Ovary (tissue), 10 donors: ENCODE measurements at regions of chr19 and their contacts with region 1.

Region 1: GRCh38 chr19:18152444-18152816 is 533 bp upstream of the PIK3R2 start:
- DNase-seq: peak; percentile 94 to 99 (median 98)
- H3K4me3 ChIP-seq: peak overlapping the region; percentile 66
- H3K27ac ChIP-seq: peak overlapping the region; percentile 73 to 79
- H3K4me1 ChIP-seq: peaks cover 18% of the 10 kb centered on the region
- H3K27me3 ChIP-seq: no peaks in the 10 kb centered on the region
- CTCF ChIP-seq: peak; percentile 22 to 76 (median 74)
- EP300 ChIP-seq: no peak
- POLR2A ChIP-seq: peak; percentile 2

Region 2: GRCh38 chr19:17859533-17860330 is 292.7 kb before region 1 on chr19 and contains the start of gene RPL18A:
- intact Hi-C with region 1: no loop called
- DNase-seq: peak; percentile 98 to 99 (median 98)
- H3K4me3 ChIP-seq: peak within 1 kb of the TSS; percentile 92
- H3K27ac ChIP-seq: peak within 1 kb of the TSS; percentile 79 to 86
- H3K4me1 ChIP-seq: peaks cover 5% of the 10 kb centered on the region
- H3K27me3 ChIP-seq: no peaks in the 10 kb centered on the region
- CTCF ChIP-seq: peak; percentile 63 to 88 (median 78)
- EP300 ChIP-seq: no peak
- POLR2A ChIP-seq: peak; percentile 91
- total RNA-seq, gene RPL18A: 2,762 to 5,071 (median 3,195) TPM

Region 3: GRCh38 chr19:17947815-17948513 is 204.5 kb before region 1 on chr19:
- intact Hi-C with region 1: no loop called
- DNase-seq: peak; percentile 93 to 97 (median 96)
- H3K4me3 ChIP-seq: peak overlapping the region; percentile 61
- H3K27ac ChIP-seq: peak overlapping the region in 1 of 2 donors; percentile 21
- H3K4me1 ChIP-seq: peaks cover 14% of the 10 kb centered on the region
- H3K27me3 ChIP-seq: peaks cover 11% of the 10 kb centered on the region
- CTCF ChIP-seq: no peak
- EP300 ChIP-seq: no peak
- POLR2A ChIP-seq: no peak

Region 4: DNA sequence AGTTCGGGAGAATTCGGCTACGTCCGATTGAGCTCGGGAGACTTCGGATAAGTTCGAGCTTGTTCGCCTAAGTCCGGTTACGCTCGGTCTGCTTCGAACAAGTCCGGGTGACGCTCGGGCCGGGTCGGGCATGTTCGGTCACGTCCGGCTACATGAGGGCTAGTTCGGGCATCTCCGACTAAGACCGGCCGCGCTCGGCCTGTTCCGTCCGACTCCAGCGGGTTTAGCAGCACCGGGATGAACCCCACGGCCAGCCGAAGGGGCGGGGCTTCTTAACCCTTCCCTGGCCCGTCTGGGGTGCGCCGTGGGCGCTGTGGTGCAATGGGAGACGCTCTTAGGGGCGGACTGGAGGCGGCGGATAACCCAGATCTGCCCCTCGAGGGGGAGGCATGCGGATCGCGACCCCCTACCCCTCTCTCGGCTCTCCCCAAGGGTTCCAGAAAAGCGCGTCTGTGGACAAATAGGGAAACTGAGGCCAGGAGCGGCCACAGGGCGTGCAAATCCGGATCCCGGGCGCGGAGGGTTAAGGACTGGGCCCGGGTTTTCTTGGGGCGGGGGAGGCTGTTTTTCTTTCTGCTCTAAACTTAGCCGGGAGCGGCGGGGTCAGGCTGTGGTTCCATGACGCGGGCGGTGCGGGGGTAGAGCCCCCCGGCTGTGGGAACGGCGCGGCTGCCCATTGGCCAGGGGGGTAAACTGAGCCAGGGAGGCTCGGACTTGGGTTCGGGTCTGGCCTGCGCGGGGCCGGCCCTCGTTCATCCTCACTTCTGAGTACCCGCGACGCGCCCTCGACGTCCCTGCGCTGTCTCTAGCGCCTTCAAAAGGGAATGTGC is 72.3 kb after region 1 on chr19:
- intact Hi-C with region 1: loop called in 1 of 4 experiments (anchors 10 kb)
- DNase-seq: peak; percentile 98 to 99 (median 99)
- H3K4me3 ChIP-seq: peak overlapping the region; percentile 34
- H3K27ac ChIP-seq: peak overlapping the region in 1 of 2 donors; percentile 51
- H3K4me1 ChIP-seq: peaks cover 6% of the 10 kb centered on the region
- H3K27me3 ChIP-seq: peaks cover 4% of the 10 kb centered on the region
- CTCF ChIP-seq: no peak
- EP300 ChIP-seq: no peak
- POLR2A ChIP-seq: no peak